ENCODE measurements at regions of chr18 and their contacts with region 1.

Region 1: DNA sequence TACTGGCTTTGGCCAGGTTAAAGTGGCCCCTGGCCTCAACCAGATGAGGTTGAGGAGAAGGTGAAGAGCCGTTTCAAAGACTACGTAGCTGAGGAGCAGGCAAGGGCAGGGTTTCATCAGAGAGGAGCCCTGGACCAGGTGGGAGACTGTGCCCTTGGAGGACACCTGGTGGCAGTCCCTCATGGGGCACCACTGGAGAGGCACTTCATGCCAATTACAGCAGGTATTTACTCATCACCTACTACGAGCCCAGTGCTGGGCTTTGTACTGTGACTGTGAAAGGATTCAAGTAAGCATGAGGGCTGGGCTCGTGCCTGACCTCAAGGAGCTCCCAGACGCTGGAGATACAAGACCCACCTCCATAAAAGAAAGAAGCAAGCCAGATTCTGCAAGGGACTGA is 37.6 kb downstream of the SMAD7 start:
- DNase-seq: peak in 4 of 9 donors; percentile 32 to 51 (median 44)
- ATAC-seq: peak; percentile 78
- H3K4me3 ChIP-seq: no peak overlapping the region
- H3K4me3 Mint-ChIP-seq: no peak overlapping the region
- H3K27ac ChIP-seq: no peak overlapping the region
- H3K27ac Mint-ChIP-seq: peak overlapping the region in 2 of 9 donors; percentile 28 to 55
- H3K4me1 ChIP-seq: peaks cover 11 to 19% of the 10 kb centered on the region in 2 donors
- H3K4me1 Mint-ChIP-seq: peaks cover 22 to 43% (median 33%) of the 10 kb centered on the region in 7 donors
- H3K27me3 ChIP-seq: no peaks in the 10 kb centered on the region
- H3K27me3 Mint-ChIP-seq: peaks cover 0 to 1% (median 0%) of the 10 kb centered on the region in 5 donors

Region 2: DNA sequence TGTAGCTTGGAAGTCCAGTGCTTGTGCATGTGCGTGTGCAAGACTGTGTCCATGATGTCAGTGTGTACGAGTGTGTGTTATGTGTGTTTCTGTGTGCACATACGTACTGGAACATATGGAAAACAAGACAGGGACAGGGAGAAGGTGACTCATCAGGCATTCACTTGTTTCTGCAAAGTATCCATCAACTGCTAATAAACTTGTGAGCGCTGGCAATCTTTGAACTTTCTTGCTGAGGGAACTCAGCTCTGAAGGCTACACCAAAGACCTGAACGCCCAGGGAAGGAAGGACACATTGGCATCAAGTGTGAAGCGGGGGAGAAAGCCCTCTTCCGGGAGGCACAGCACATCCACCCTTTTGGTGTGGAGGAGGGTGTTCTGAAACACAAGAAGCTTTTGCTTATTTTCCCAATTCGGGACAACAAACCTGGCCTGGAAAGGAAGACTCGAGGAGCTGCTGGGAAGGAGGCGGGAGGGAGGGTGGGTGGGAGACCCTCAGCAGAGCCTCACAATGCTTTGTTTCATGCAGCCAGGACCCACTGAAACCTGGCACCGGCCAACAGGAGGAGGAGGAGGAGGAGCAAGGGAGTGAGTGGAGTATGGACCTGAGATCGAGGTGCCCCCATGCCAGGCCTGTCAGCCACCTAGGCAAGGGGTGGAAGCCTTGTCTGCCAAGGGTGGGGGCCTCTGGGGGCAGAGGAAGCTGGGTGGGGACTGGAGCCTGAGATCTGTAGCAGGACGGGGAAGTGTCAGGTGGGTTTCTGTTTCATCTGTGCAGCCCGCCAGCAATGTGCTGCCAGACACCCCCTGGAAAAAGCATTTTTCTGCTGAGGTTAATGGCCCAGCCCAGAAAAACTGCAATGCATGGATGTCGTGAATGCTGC is 10.8 kb after region 1 on chr18:
- CTCF ChIA-PET with region 1: no interaction called
- POLR2A ChIA-PET with region 1: no interaction called
- intact Hi-C with region 1: no loop called
- DNase-seq: no peak
- ATAC-seq: no peak
- H3K4me3 ChIP-seq: no peak overlapping the region
- H3K4me3 Mint-ChIP-seq: peak overlapping the region; percentile 38 to 88 (median 74)
- H3K27ac ChIP-seq: no peak overlapping the region
- H3K27ac Mint-ChIP-seq: peak overlapping the region in 7 of 9 donors; percentile 41 to 84 (median 65)
- H3K4me1 ChIP-seq: peaks cover 44 to 56% of the 10 kb centered on the region in 2 donors
- H3K4me1 Mint-ChIP-seq: peaks cover 63 to 88% (median 70%) of the 10 kb centered on the region in 7 donors
- H3K27me3 ChIP-seq: no peaks in the 10 kb centered on the region
- H3K27me3 Mint-ChIP-seq: no peaks in the 10 kb centered on the region

Region 3: GRCh38 chr18:49178736-49179135 is 265.5 kb after region 1 on chr18:
- CTCF ChIA-PET with region 1: no interaction called
- POLR2A ChIA-PET with region 1: no interaction called
- intact Hi-C with region 1: loop called in 1 of 2 experiments (anchors 5 kb)
- DNase-seq: no peak
- ATAC-seq: no peak
- H3K4me3 ChIP-seq: no peak overlapping the region
- H3K4me3 Mint-ChIP-seq: no peak overlapping the region
- H3K27ac ChIP-seq: no peak overlapping the region
- H3K27ac Mint-ChIP-seq: no peak overlapping the region
- H3K4me1 ChIP-seq: no peaks in the 10 kb centered on the region
- H3K4me1 Mint-ChIP-seq: peaks cover 4 to 21% (median 9%) of the 10 kb centered on the region in 7 donors
- H3K27me3 ChIP-seq: no peaks in the 10 kb centered on the region
- H3K27me3 Mint-ChIP-seq: peaks cover 0 to 15% (median 0%) of the 10 kb centered on the region in 5 donors

Measured in naive thymus-derived CD4-positive, alpha-beta T cell (primary cell).